ENCODE measurements at regions of chr19 and their contacts with region 1.

Region 1: GRCh38 chr19:18557474-18558201 is at the start of gene KXD1:
- DNase-seq: peak; percentile 99
- ATAC-seq: peak; percentile 99
- H3K4me3 Mint-ChIP-seq: peak within 1 kb of the TSS; percentile 90
- H3K27ac Mint-ChIP-seq: peak within 1 kb of the TSS; percentile 95
- H3K4me1 Mint-ChIP-seq: peaks cover 15% of the 10 kb centered on the region
- H3K27me3 Mint-ChIP-seq: no peaks in the 10 kb centered on the region
- CTCF ChIP-seq: no peak
- total RNA-seq, gene KXD1: 137 to 142 TPM

Region 2: DNA sequence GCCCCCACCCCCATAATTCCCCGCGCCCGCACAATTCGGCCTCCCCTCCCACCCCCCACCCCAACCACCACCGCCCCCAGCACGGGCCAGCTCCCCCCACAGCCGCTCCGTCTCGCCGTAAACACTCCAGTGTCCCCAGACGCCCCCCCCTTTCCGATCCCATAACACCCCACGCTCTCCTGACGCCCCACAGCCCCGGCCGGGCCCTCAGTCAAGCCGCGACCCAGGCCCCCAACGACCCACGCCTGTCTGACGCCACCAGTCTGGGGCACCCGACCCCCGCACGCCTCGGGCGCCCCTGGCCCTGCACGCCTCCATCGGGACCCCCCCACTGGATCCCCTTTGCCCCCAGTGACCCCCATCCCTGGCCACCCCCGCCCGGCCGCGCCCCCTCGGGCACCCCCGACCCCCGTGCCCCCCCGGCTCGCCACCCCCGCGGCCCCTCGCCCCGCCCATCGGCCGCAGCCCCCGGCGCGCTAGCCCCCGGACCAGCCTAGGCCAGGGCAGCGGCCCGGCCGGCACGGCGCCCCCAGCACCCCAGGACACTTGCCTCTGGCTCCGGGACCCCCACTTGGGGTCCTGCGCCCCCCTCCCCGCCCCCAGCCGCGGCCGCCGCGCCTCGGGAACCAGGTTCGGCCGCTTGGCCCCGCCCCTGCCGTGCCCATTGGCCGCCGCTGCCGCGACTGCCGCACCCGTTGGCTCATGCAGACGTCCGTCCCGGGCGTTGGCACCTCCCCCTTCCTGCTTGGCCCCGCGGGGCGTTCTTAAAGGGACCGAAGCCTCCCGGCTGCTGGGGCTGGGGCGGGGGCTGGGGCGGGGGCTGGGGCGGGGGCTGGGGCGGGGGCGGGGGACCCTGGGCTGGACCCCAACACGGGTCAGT is 14.5 kb before region 1 on chr19 and contains the start of gene FKBP8:
- CTCF ChIA-PET with region 1: interaction called, 13 read pairs
- POLR2A ChIA-PET with region 1: interaction called, 18 read pairs
- intact Hi-C with region 1: no loop called
- DNase-seq: peak; percentile 97
- ATAC-seq: peak; percentile 96
- H3K4me3 Mint-ChIP-seq: peak within 1 kb of the TSS; percentile 90
- H3K27ac Mint-ChIP-seq: peak within 1 kb of the TSS; percentile 98
- H3K4me1 Mint-ChIP-seq: peaks cover 22% of the 10 kb centered on the region
- H3K27me3 Mint-ChIP-seq: no peaks in the 10 kb centered on the region
- CTCF ChIP-seq: no peak
- total RNA-seq, gene FKBP8: 216 to 220 TPM